ENCODE measurements at regions of chr19 and their contacts with region 1.

Region 1: GRCh38 chr19:6862673-6863078 is 24.7 kb upstream of the ADGRE1 start:
- DNase-seq: peak; percentile 77
- ATAC-seq: peak; percentile 89
- H3K4me3 Mint-ChIP-seq: peak overlapping the region; percentile 85
- H3K27ac Mint-ChIP-seq: peak overlapping the region; percentile 76
- H3K4me1 Mint-ChIP-seq: peaks cover 15% of the 10 kb centered on the region
- H3K27me3 Mint-ChIP-seq: peaks cover 2% of the 10 kb centered on the region
- CTCF ChIP-seq: no peak

Region 2: GRCh38 chr19:6048808-6049405 is 813.8 kb before region 1 on chr19:
- CTCF ChIA-PET with region 1: interaction called, 7 read pairs
- POLR2A ChIA-PET with region 1: no interaction called
- intact Hi-C with region 1: loop called (anchors 1 kb)
- DNase-seq: peak; percentile 62
- ATAC-seq: peak; percentile 96
- H3K4me3 Mint-ChIP-seq: no peak overlapping the region
- H3K27ac Mint-ChIP-seq: no peak overlapping the region
- H3K4me1 Mint-ChIP-seq: peaks cover 4% of the 10 kb centered on the region
- H3K27me3 Mint-ChIP-seq: no peaks in the 10 kb centered on the region
- CTCF ChIP-seq: no peak

Region 3: DNA sequence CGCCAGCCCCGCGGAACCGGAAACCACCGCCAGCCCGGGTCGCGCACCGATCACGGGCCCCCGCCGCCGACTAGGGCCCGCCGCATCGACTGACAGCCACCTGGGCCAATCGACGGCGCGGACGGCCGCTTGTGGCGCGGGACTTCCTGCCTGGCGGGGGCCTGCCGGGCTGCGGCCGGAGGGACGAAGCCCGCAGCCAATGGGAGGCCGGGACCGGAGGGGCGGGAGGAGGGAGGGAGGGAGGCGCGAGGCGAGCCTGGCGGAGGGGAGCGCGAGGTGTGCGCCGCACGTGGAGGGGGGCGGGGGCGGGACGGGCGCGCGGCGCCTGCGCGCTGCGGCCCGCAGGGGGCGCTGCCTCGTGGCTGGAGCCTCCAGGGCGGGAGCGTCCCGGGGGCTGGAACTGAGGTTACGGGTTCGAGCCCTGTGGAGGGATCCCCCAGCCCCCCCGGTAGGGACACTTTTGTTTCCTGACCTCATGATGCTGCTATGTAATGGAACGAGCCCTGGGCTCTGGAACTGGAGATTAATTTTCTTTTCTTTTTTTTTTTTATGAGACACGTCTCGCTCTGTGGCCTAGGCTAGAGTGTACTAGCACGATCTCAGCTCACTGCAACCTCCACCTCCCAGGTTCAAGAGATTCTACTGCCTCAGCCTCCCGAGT is 582.6 kb before region 1 on chr19 and contains the start of gene MLLT1:
- CTCF ChIA-PET with region 1: no interaction called
- POLR2A ChIA-PET with region 1: interaction called, 4 read pairs
- intact Hi-C with region 1: loop called (anchors 1 kb)
- DNase-seq: peak; percentile 95
- ATAC-seq: peak; percentile 95
- H3K4me3 Mint-ChIP-seq: peak within 1 kb of the TSS; percentile 88
- H3K27ac Mint-ChIP-seq: peak within 1 kb of the TSS; percentile 68
- H3K4me1 Mint-ChIP-seq: peaks cover 35% of the 10 kb centered on the region
- H3K27me3 Mint-ChIP-seq: no peaks in the 10 kb centered on the region
- CTCF ChIP-seq: peak; percentile 36
- total RNA-seq, gene MLLT1: 39.0 and 41.3 TPM in 2 replicates

Region 4: GRCh38 chr19:6501740-6502648 is 360.7 kb before region 1 on chr19 and contains the start of gene TUBB4A:
- CTCF ChIA-PET with region 1: no interaction called
- POLR2A ChIA-PET with region 1: no interaction called
- intact Hi-C with region 1: loop called (anchors 5 kb)
- DNase-seq: peak; percentile 65
- ATAC-seq: peak; percentile 78
- H3K4me3 Mint-ChIP-seq: peak within 1 kb of the TSS; percentile 87
- H3K27ac Mint-ChIP-seq: no peak within 1 kb of the TSS
- H3K4me1 Mint-ChIP-seq: peaks cover 23% of the 10 kb centered on the region
- H3K27me3 Mint-ChIP-seq: peaks cover 4% of the 10 kb centered on the region
- CTCF ChIP-seq: no peak
- total RNA-seq, gene TUBB4A: 13.2 and 16.8 TPM in 2 replicates

Region 5: GRCh38 chr19:6590827-6591319 is 271.8 kb before region 1 on chr19 and contains the start of gene CD70:
- CTCF ChIA-PET with region 1: no interaction called
- POLR2A ChIA-PET with region 1: interaction called, 6 read pairs
- intact Hi-C with region 1: loop called (anchors 2 kb)
- DNase-seq: peak; percentile 64
- ATAC-seq: peak; percentile 67
- H3K4me3 Mint-ChIP-seq: peak within 1 kb of the TSS; percentile 88
- H3K27ac Mint-ChIP-seq: peak within 1 kb of the TSS; percentile 82
- H3K4me1 Mint-ChIP-seq: peaks cover 68% of the 10 kb centered on the region
- H3K27me3 Mint-ChIP-seq: peaks cover 17% of the 10 kb centered on the region
- CTCF ChIP-seq: no peak
- total RNA-seq, gene CD70: 29.3 and 29.7 TPM in 2 replicates

Region 6: DNA sequence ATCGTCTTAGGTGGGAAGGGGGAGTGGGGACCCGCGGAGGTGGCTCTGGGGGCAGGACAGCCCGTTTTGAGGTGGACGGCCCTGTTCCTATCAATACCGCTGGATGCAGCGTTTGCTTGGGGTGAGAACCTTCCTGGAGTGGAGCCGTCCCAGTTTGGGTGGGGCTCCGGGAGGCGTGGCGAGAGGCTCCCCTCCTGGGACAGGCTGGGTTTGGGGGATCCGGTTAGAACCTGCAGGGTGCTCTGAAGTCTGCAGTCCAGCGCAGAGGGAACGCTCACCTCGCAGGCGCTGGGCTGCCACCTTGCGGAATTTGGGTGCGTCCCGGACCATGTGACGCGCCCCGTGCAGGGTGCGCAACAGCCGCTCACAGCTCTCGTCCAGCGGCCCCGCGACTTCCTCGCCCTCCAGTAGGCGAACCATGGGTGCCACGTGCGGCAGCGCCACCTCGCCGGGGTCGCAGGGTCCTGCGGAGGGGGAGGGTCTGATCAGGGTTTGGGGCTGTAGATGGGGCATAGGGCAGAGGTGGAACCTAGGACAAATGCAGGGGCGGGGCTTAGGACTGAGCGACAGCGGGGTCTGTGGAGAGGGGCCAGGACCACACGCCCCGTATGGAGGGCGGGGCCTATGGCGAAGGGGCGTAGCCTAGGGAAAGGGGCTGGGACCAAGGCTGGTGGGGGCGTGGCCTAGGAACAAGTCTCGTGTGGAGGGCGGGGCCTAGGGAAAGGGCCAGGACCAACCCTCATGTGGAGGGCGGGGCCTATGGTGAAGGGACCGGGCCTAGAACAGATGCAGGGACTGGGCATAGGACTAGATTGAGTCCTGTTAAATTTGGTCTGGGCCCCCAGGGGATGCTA is 109.3 kb before region 1 on chr19:
- CTCF ChIA-PET with region 1: interaction called, 3 read pairs
- POLR2A ChIA-PET with region 1: interaction called, 7 read pairs
- intact Hi-C with region 1: loop called (anchors 1 kb)
- DNase-seq: peak; percentile 91
- ATAC-seq: peak; percentile 93
- H3K4me3 Mint-ChIP-seq: peak overlapping the region; percentile 87
- H3K27ac Mint-ChIP-seq: peak overlapping the region; percentile 82
- H3K4me1 Mint-ChIP-seq: peaks cover 33% of the 10 kb centered on the region
- H3K27me3 Mint-ChIP-seq: no peaks in the 10 kb centered on the region
- CTCF ChIP-seq: no peak

Region 7: DNA sequence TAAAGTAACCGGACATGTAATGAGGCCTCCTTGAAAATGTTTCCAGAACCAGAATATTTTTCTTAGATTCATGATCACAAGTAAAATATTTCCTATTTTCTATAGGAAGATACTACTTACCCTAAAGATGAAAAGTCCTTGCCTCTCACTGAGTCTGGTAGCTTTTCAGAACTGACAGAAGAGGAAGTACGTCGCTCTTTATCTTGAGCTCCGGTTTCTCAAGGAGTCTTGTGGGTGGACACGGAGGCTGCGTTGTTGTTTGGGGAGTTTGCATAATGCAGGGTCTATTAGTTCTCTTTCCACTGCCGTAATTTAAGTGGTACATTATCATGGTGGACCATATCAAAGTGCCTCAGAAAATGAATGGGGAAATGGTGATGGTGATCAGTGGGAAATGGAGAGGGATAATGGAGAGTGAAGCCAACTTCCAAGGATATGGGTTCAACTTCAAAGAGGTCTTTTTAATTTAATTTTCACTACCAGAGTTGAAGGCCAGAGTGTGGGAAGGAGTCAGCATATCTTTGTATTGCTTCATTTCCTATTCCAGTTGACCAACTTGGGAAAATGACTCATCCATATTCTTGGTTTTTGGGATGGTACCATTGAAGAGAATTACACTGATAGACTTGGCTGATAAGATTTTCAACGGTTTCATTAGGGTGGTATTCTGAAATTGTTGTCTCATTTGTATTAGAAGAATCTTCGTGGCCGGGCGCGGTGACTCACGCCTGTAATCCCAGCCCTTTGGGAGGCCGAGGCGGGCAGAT is 135.2 kb after region 1 on chr19:
- CTCF ChIA-PET with region 1: no interaction called
- POLR2A ChIA-PET with region 1: no interaction called
- intact Hi-C with region 1: no loop called
- DNase-seq: no peak
- ATAC-seq: no peak
- H3K4me3 Mint-ChIP-seq: no peak overlapping the region
- H3K27ac Mint-ChIP-seq: no peak overlapping the region
- H3K4me1 Mint-ChIP-seq: peaks cover 4% of the 10 kb centered on the region
- H3K27me3 Mint-ChIP-seq: peaks cover 18% of the 10 kb centered on the region
- CTCF ChIP-seq: no peak

Measured in activated B cell treated with CpG ODN at 0.5 μM for 24 hours (primary cell).